PC-9 (cell line): ENCODE measurements at regions of chr19 and their contacts with region 1.

Region 1: DNA sequence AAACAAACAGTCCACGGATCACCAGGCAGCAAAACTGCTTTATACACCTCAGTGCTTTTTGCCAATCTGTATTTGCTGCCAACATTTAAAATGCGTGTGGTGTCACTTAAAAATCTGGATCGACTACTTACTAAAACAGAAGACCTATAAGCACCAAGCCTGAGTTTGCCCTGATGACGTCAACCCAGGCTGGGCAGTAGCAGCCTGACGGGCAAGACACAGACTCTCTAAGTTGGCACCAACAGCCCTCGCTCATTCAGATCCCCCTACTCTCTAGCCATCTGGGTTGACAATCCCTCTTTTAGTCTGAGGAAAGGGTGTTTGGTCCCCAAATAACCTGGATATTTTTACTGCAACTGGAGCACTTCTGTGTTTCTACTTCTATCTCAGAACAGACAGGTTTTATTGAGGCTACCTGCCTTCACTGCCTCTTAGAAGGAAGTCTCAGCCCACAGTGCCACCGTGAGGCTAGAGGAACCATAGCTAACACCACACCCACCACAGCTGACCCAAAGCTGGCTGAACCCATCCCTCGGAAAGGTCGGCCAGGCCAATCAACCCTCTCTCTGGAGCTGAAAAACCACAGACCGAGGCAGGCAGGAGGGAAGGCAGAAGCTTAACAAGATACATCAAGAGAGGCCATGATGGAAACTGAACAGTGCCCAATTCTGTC is 6.9 kb downstream of the SUGP2 start:
- DNase-seq: no peak
- H3K4me3 ChIP-seq: no peak overlapping the region
- H3K27ac ChIP-seq: no peak overlapping the region
- H3K4me1 ChIP-seq: no peaks in the 10 kb centered on the region
- H3K27me3 ChIP-seq: no peaks in the 10 kb centered on the region
- CTCF ChIP-seq: no peak; the same call in 1 of the 2 replicates

Region 2: GRCh38 chr19:19224852-19225494 is 198.5 kb after region 1 on chr19:
- CTCF ChIA-PET with region 1: interaction called, 14 read pairs
- POLR2A ChIA-PET with region 1: no interaction called
- intact Hi-C with region 1: no loop called
- DNase-seq: peak; percentile 57 to 76
- H3K4me3 ChIP-seq: peak overlapping the region; percentile 13; the same call in 1 of the 2 replicates
- H3K27ac ChIP-seq: no peak overlapping the region
- H3K4me1 ChIP-seq: no peaks in the 10 kb centered on the region
- H3K27me3 ChIP-seq: peaks cover 79% of the 10 kb centered on the region
- CTCF ChIP-seq: peak; percentile 62